Activated CD4-positive, alpha-beta T cell treated with anti-CD3 and anti-CD28 coated beads, Interleukin-2, amount 10 ng/mL, durations not matched to agents 7 days and 5 days (primary cell): ENCODE measurements at regions of chr2 and their contacts with region 1.

Region 1: DNA sequence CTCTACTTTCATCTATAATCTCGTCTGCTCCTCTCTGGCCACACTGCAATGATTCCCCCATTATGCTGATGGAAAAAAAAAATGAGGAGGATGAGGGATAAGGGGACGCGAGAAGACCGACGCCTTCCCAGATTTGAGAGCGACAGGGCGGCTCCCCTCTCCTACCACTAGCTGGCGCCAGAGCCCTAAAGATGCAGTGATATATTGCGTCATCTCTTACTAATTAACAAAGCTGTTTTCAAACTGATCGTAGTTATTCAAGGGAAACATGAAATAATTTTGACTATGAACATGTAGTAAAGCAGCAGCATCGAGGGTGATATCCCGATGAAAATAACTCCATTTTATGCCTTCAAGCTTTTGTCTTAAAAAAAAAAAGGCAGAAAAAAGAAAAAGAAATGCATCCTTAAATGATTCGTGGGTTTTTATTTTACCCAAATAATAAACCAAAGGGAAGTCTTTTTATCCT is 48.0 kb upstream of the HNRNPA3 start:
- DNase-seq: peak; percentile 85
- H3K4me3 Mint-ChIP-seq: no peak overlapping the region
- H3K27ac Mint-ChIP-seq: no peak overlapping the region
- H3K4me1 Mint-ChIP-seq: peaks cover 34% of the 10 kb centered on the region
- H3K27me3 Mint-ChIP-seq: peaks cover 8% of the 10 kb centered on the region

Region 2: DNA sequence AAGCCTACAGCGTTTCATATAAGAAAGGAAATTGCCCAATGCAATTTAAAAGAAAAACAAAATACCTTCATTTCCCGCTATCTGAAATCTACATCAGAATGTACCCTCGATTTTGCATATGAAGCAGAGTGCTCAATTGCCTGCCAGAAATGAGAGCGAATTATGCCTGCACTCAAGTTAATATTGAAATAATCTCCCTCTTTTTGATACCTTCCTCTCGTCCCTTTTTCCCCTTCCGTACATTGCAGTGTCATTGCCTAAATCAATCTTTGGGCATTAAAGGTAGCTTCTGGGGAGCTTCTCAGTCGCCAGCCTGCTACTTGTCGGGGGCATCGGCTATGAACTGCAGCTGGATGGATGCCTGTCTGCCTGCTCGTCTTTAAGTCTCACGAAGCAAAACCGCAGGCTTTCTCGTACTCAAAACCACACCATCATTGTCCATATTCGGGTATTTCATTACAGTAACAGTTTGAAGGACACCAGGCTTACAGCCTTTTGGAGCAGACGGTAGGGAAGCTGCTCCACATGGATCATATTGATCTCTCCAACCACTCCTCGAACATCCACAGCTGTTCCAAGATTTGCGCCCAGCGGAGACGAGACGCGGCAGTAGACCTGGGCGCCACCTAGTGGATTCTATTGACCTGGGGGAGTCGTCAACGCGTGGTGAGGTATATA is 16.0 kb before region 1 on chr2:
- CTCF ChIA-PET with region 1: interaction called, 24 read pairs
- POLR2A ChIA-PET with region 1: no interaction called
- DNase-seq: peak; percentile 82
- H3K4me3 Mint-ChIP-seq: peak overlapping the region; percentile 78
- H3K27ac Mint-ChIP-seq: peak overlapping the region; percentile 51
- H3K4me1 Mint-ChIP-seq: peaks cover 17% of the 10 kb centered on the region
- H3K27me3 Mint-ChIP-seq: peaks cover 56% of the 10 kb centered on the region

Region 3: DNA sequence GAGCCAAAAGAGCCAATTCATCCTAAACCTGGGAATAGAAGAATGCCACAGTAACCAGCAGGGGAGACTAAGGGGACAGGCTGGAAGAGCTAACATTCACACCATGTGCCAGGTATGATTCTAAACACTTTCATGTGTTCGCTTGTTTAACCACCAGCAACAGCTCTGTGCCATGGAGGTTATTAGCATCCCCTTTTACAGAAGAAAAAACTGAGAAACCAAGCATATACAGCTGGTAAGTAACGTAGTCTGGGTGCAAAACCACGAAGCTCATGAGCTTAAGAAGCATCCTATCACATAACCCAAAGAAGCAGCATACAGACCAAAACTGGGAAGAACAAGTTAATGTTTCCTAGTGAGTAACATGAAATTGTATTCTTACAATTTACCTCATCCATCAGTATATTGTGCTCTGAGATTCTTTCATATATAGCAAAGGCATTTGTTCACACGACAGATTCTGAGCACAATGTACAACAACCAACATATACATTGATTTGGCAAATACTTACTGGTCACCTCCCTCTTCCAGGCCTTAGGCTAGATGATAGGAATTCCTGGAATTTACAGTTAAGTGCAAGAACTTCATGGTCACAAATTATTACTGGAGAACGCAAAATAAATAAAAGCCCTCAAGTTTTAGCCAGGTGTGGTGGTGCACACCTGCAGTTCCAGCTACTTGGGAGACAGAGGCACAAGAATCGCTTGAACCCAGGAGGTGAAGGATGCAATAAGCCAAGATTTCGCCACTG is 11.5 kb after region 1 on chr2:
- CTCF ChIA-PET with region 1: interaction called, 18 read pairs
- POLR2A ChIA-PET with region 1: no interaction called
- DNase-seq: no peak
- H3K4me3 Mint-ChIP-seq: no peak overlapping the region
- H3K27ac Mint-ChIP-seq: no peak overlapping the region
- H3K4me1 Mint-ChIP-seq: no peaks in the 10 kb centered on the region
- H3K27me3 Mint-ChIP-seq: peaks cover 13% of the 10 kb centered on the region

Region 4: DNA sequence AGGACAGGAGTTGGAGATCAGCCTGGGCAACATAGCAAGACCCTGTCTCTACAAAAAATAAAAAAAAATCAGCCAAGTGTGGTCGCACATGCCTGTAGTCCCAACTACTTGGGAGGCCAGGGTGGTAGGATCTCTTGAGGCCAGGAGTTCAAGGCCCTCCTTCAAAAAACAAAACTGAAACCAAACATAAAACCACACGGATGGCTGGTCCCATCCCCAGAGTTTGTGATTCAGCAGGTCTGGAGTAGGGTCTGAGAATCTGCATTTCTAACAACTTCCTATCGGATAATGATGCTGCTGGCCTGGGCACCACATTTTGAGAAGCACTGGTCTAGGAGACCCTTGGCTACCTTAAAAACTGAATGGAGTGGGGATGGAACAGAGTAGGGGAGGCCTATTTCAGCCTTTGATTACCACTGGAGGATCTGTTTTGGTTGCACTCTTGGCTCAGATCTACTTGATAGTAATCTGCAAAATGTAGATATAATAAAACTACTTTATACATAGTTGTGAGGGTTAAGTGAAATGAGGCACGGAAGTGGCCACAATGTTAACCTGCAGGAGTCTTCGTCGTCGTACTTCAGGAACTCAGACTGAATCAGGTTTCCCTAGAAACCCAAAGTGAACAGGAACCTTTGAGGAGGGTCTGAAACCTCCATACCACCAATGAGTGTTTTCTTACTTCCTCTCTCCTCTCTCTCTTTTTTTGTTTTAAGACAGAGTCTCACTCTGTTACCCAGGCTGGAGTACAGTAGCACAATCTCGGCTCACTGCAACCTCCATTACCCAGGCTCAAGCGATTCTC is 125.4 kb after region 1 on chr2:
- CTCF ChIA-PET with region 1: interaction called, 15 read pairs
- POLR2A ChIA-PET with region 1: interaction called, 3 read pairs
- DNase-seq: peak; percentile 47
- H3K4me3 Mint-ChIP-seq: peak overlapping the region; percentile 60
- H3K27ac Mint-ChIP-seq: peak overlapping the region; percentile 92
- H3K4me1 Mint-ChIP-seq: peaks cover 63% of the 10 kb centered on the region
- H3K27me3 Mint-ChIP-seq: no peaks in the 10 kb centered on the region

Region 5: DNA sequence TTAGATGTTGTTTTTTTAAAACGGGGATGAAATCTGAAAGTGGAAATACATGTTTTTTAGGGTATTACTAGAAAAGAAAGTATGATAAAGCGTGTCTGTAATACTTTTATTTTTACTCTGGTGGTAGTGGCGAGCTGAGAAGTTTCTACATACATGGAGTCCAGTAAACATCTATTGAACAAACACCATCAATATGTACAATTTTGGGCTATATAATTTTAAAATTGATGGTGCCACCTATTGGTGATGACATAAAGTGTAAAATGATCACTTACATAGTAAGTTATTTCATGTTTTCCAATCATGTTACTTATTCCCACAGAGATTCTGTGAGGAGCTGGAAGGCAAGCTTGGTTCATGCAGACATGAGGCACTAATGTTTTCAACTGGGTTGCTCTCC is 131.4 kb after region 1 on chr2:
- CTCF ChIA-PET with region 1: interaction called, 15 read pairs
- POLR2A ChIA-PET with region 1: interaction called, 3 read pairs
- DNase-seq: no peak
- H3K4me3 Mint-ChIP-seq: no peak overlapping the region
- H3K27ac Mint-ChIP-seq: no peak overlapping the region
- H3K4me1 Mint-ChIP-seq: peaks cover 52% of the 10 kb centered on the region
- H3K27me3 Mint-ChIP-seq: no peaks in the 10 kb centered on the region

Region 6: GRCh38 chr2:177332041-177332991 is 167.7 kb after region 1 on chr2:
- CTCF ChIA-PET with region 1: interaction called, 24 read pairs
- POLR2A ChIA-PET with region 1: no interaction called
- DNase-seq: peak; percentile 65
- H3K4me3 Mint-ChIP-seq: no peak overlapping the region
- H3K27ac Mint-ChIP-seq: no peak overlapping the region
- H3K4me1 Mint-ChIP-seq: peaks cover 24% of the 10 kb centered on the region
- H3K27me3 Mint-ChIP-seq: no peaks in the 10 kb centered on the region